ENCODE measurements at regions of chr1 and their contacts with region 1.

Region 1: DNA sequence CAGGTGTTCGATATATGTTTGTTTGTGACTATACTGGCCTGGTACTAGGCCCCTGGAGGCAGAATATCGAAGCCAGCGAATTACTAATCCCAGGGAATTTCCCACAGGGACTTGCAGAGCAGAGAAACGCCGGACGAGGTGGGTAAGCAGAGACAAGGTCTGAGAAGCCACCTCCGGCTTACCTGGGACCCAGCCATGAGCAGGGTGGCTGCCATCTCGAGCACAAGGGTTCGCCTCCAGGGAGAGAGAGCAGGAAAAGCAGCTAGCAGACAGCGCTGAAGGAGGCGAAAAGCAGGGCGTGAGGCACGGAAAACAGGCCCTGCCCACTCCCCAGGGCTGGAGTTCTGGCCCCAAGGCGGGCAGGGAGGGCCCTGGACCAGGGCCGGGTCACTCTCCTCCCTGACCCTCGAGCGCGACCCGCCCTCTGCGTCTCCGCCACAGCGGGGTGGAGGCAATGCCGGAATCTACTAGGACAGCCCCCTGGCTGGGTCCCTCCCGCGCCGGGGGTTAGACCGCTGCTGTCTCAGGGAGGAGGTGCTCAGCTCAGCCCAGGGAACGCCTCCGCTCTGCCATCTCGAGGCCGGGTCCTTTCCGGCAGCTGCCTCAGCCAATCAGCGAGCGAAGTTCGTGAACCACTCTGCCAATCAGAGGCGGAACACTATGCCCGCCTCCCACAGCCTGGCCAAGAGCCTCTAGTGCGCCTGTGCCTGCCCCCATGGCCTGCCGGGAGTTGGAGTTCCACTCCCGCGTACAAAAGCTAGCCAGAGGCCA is 1.7 kb downstream of the ZNF436 start:
- DNase-seq: peak; percentile 99
- ATAC-seq: peak; percentile 95
- H3K4me3 Mint-ChIP-seq: peak overlapping the region; percentile 93
- H3K27ac Mint-ChIP-seq: peak overlapping the region; percentile 98
- H3K4me1 Mint-ChIP-seq: peaks cover 27% of the 10 kb centered on the region
- H3K27me3 Mint-ChIP-seq: no peaks in the 10 kb centered on the region

Region 2: DNA sequence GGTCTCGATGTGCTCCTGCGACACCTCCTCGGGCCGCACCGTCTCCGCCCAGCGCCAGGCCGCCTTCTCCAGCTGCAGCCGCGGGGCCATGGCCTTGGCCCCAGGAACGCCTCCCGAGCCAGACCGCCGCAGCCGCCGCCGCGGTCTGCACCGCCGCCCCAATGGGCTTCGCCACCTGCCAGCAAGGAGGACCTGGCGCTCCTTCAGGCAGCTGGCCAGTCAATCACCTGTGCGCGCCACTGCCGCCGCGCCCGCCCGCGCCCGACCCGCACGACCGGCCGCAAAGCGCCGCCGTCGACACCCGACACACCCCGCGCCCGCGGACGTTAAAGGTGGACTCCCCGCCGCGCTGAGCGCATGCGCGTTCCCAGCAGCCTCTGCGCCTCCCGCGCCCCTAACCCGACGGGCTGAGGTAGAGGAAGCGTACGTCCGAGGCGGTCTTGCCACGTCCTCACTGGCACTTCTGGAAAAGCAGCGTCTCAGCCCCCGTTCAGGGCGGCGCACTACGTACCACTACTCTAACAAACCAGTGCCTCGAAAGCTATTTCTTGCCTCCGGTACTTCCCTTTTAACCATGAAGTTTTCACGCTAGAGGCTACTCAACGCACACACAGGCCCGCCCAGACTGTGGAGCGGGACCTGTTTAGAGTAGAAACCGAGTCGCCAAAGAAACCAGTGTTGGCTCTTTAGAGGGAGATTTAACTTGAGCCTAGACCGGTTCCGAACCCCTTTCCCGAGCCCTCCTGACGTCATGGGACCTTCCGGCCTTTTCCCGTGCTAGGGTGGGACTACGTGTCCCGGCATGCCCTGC is 1584.9 kb before region 1 on chr1 and contains the start of gene USP48:
- CTCF ChIA-PET with region 1: no interaction called
- POLR2A ChIA-PET with region 1: no interaction called
- intact Hi-C with region 1: loop called in 1 of 2 experiments (anchors 5 kb)
- DNase-seq: peak; percentile 98
- ATAC-seq: peak; percentile 79
- H3K4me3 Mint-ChIP-seq: peak within 1 kb of the TSS; percentile 87
- H3K27ac Mint-ChIP-seq: peak within 1 kb of the TSS; percentile 100
- H3K4me1 Mint-ChIP-seq: peaks cover 21% of the 10 kb centered on the region
- H3K27me3 Mint-ChIP-seq: no peaks in the 10 kb centered on the region
- total RNA-seq, gene USP48: 66.9 to 81.5 TPM

Region 3: DNA sequence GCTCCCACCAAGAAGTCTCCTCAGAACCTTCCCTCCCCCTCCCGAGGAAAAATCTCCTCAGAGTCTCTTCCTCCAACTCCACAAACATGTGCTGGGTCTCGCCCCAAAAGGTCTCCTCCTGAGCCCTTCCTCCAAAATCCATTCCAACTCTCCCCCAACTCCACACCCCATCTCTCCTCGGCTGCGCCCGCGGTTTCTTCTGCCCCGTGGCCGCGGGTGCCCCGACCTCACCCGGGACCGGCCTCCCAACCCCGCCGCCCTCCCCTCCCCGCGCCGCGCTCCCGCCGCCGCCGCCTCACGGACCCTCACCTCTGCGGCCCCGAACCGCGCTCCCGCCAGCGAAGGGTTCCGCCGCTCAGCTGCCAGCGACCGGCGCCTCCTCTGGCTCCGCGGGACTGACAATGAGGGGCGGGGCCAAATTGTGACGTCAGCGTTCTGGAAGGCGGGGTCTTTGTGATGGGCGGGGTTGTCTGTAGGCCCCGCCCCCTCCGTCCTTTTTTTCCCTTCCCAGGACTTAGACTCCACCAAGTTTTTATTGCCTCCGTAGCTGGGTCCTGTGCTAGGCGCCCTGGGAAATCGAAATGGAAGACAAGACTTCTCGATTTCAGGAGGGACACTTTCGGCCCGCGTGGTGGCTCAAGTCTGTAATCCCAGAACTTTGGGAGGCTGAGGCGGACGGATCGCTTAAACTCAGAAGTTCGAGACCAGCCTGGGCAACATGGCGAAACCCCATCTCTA is 199.3 kb before region 1 on chr1 and contains the start of gene LUZP1:
- CTCF ChIA-PET with region 1: no interaction called
- POLR2A ChIA-PET with region 1: no interaction called
- intact Hi-C with region 1: loop called in 1 of 2 experiments (anchors 1 kb)
- DNase-seq: peak; percentile 94
- ATAC-seq: peak; percentile 85
- H3K4me3 Mint-ChIP-seq: peak within 1 kb of the TSS; percentile 97
- H3K27ac Mint-ChIP-seq: peak within 1 kb of the TSS; percentile 86
- H3K4me1 Mint-ChIP-seq: peaks cover 27% of the 10 kb centered on the region
- H3K27me3 Mint-ChIP-seq: no peaks in the 10 kb centered on the region
- total RNA-seq, gene LUZP1: 13.2 to 13.6 TPM

Region 4: GRCh38 chr1:23530747-23531561 is 163.0 kb after region 1 on chr1 and contains the start of gene E2F2:
- CTCF ChIA-PET with region 1: interaction called, 6 read pairs
- POLR2A ChIA-PET with region 1: interaction called, 12 read pairs
- intact Hi-C with region 1: loop called (anchors 1 to 2 kb)
- DNase-seq: peak; percentile 91
- ATAC-seq: peak; percentile 81
- H3K4me3 Mint-ChIP-seq: peak within 1 kb of the TSS; percentile 84
- H3K27ac Mint-ChIP-seq: peak within 1 kb of the TSS; percentile 95
- H3K4me1 Mint-ChIP-seq: peaks cover 68% of the 10 kb centered on the region
- H3K27me3 Mint-ChIP-seq: no peaks in the 10 kb centered on the region
- total RNA-seq, gene E2F2: 25.0 to 32.0 TPM

Region 5: GRCh38 chr1:23743287-23744052 is 375.5 kb after region 1 on chr1 and contains the start of gene ELOA:
- CTCF ChIA-PET with region 1: interaction called, 4 read pairs
- POLR2A ChIA-PET with region 1: no interaction called
- intact Hi-C with region 1: loop called in 1 of 2 experiments (anchors 1 kb)
- DNase-seq: peak; percentile 88
- ATAC-seq: peak; percentile 94
- H3K4me3 Mint-ChIP-seq: peak within 1 kb of the TSS; percentile 87
- H3K27ac Mint-ChIP-seq: peak within 1 kb of the TSS; percentile 91
- H3K4me1 Mint-ChIP-seq: peaks cover 42% of the 10 kb centered on the region
- H3K27me3 Mint-ChIP-seq: no peaks in the 10 kb centered on the region
- total RNA-seq, gene ELOA: 34.5 to 38.6 TPM

Region 6: DNA sequence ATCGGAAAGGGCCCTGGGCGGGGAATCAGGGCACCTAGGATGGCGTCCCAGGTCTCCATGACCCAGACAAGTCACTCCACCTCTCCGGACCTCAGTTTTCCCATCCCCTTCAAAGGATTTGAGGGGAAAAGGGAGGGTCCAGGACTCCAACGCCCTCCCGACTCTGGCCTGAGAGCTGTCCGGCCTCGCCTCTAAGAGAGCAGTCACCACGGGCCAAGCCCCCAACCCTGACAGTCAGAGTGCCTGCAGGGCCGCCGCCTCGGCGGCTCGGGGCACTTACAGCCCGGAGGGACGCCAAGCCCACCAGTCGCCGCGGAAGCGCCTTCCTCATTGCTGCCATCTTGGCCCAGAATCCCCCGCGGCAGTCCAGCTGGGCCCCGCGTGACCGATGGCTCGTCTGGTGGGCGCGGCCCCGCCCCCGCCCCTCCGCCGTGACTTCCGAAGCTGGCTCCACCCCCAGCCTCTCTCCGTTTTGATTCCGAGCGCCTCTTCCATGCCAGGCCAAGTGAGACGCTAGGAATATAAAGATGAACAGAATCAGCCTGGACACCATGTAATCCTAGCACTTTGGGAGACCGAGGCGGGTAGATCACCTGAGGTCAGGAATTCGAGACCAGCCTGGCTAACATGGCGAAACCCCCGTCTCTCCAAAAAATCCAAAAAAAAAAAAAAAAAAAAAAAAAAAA is 457.2 kb after region 1 on chr1 and contains the start of gene HMGCL:
- CTCF ChIA-PET with region 1: no interaction called
- POLR2A ChIA-PET with region 1: no interaction called
- intact Hi-C with region 1: loop called in 1 of 2 experiments (anchors 1 kb)
- DNase-seq: peak; percentile 95
- ATAC-seq: peak; percentile 94
- H3K4me3 Mint-ChIP-seq: peak within 1 kb of the TSS; percentile 97
- H3K27ac Mint-ChIP-seq: peak within 1 kb of the TSS; percentile 97
- H3K4me1 Mint-ChIP-seq: peaks cover 19% of the 10 kb centered on the region
- H3K27me3 Mint-ChIP-seq: no peaks in the 10 kb centered on the region
- total RNA-seq, gene HMGCL: 31.9 to 46.0 TPM

Measured in activated CD4-positive, alpha-beta T cell treated with anti-CD3 and anti-CD28 coated beads for 36 hours (primary cell).